Activated B cell treated with CpG ODN at 0.5 μM for 24 hours (primary cell): ENCODE measurements at regions of chr19 and their contacts with region 1.

Region 1: DNA sequence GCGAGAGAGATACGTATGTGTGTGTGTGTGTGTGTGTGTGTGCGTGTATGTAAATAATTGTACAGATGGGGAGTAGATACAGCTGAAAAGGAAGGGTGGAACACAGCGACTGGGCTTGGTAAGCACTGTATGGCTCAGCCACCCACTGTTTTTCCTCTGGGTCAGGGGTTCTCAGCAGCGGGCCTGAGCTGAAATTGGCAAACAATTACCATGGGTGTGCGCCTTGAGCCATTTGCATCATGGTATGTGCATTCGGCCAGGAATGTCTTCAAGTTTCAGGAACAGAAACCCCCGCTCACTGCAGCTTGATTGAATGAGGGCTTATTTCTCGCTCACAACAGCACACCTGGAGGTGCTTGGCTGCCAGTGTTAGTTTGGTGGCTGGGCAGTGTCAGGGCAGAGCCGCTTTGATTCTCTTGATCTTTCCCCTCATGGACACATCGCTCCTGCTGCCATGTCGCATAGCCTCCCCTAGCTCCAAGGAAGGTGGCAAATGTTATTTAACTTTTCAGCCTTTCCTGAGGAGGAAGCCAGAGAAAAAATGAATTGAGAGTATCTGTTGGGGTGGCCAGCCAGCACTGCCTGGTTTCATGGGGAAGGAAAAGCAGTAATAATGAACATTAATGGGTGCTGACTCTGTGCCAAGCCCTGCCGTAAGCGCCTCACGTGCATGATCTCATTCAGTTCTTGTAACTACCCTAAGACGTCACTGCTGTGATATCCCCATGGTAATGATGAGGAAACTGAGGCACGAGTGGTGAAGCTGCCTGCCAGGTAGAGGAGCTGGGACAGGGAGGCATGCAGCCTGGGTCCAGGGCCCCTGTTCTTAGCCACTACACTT is 126.9 kb downstream of the SIPA1L3 start:
- DNase-seq: peak; percentile 60
- ATAC-seq: peak; percentile 76
- H3K4me3 Mint-ChIP-seq: peak overlapping the region; percentile 79
- H3K27ac Mint-ChIP-seq: peak overlapping the region; percentile 98
- H3K4me1 Mint-ChIP-seq: peaks cover 85% of the 10 kb centered on the region
- H3K27me3 Mint-ChIP-seq: no peaks in the 10 kb centered on the region
- CTCF ChIP-seq: no peak

Region 2: GRCh38 chr19:37551129-37551993 is 482.5 kb before region 1 on chr19:
- CTCF ChIA-PET with region 1: no interaction called
- POLR2A ChIA-PET with region 1: no interaction called
- intact Hi-C with region 1: no loop called
- DNase-seq: peak; percentile 70
- ATAC-seq: peak; percentile 85
- H3K4me3 Mint-ChIP-seq: peak overlapping the region; percentile 93
- H3K27ac Mint-ChIP-seq: peak overlapping the region; percentile 91
- H3K4me1 Mint-ChIP-seq: peaks cover 12% of the 10 kb centered on the region
- H3K27me3 Mint-ChIP-seq: no peaks in the 10 kb centered on the region
- CTCF ChIP-seq: no peak

Region 3: DNA sequence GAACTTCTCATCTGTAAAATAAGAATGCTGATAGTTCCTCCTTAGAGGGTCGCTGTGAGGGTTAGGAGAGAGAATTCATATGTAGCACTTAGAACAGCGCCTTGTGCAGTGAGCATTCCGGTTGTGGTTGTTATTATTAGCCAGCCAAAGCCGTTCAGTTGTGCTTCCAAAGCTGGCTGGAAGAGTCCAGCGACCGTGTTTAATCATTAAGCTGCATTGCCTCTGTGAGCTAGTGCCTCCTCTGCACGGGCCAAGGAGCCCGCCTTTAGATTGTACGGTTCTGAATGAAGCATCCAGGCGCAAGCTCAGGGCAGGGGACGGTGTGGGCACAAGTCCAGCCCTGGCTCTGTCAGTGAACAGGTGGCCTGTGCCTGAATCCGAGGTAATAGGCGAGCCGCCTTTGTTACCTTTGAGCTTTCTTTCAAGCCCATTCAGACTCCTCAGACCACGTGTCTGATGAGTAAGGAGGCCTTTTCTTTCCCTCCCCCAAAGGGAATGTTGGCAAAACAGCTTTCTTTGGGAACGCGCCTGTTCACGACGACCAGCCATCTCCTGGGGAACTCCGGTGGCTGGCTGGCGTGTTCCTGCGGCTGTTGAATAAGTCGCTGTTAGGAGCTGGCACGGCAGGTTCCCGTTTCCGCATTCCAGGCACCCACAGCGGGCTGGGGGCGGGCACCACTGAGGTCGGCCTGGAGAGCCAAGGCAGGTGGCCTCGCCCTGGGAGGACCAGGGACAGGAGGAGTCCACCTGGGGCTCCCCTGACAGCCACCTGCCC is 101.8 kb before region 1 on chr19:
- CTCF ChIA-PET with region 1: interaction called, 7 read pairs
- POLR2A ChIA-PET with region 1: interaction called, 27 read pairs
- intact Hi-C with region 1: loop called (anchors 1 kb)
- DNase-seq: peak; percentile 52
- ATAC-seq: peak; percentile 30
- H3K4me3 Mint-ChIP-seq: peak overlapping the region; percentile 83
- H3K27ac Mint-ChIP-seq: peak overlapping the region; percentile 92
- H3K4me1 Mint-ChIP-seq: peaks cover 94% of the 10 kb centered on the region
- H3K27me3 Mint-ChIP-seq: no peaks in the 10 kb centered on the region
- CTCF ChIP-seq: no peak

Region 4: DNA sequence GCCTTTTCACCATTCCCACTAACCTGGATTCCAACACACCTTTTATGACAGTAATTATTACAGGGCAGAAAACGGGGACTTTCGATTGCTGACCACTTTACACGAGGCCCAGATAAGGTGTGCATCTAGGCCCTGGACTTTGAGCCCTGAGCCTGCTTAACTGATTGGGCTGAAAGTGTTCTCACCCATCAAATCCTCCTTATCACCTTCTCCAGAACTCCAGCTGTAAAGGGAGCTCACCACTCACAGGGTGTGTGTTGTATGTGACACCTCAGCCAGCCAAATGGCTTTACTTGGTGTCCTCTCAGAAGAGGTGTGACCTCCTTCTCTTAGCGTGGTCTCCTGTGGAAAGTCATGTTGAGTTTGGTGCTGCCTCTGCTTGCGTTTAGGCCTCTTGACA is 90.4 kb before region 1 on chr19:
- CTCF ChIA-PET with region 1: no interaction called
- POLR2A ChIA-PET with region 1: no interaction called
- intact Hi-C with region 1: no loop called
- DNase-seq: no peak
- ATAC-seq: no peak
- H3K4me3 Mint-ChIP-seq: no peak overlapping the region
- H3K27ac Mint-ChIP-seq: peak overlapping the region; percentile 31
- H3K4me1 Mint-ChIP-seq: peaks cover 58% of the 10 kb centered on the region
- H3K27me3 Mint-ChIP-seq: no peaks in the 10 kb centered on the region
- CTCF ChIP-seq: no peak

Region 5: GRCh38 chr19:37979547-37980082 is 54.3 kb before region 1 on chr19:
- CTCF ChIA-PET with region 1: no interaction called
- POLR2A ChIA-PET with region 1: interaction called, 41 read pairs
- intact Hi-C with region 1: loop called (anchors 1 kb)
- DNase-seq: no peak
- ATAC-seq: peak; percentile 3
- H3K4me3 Mint-ChIP-seq: peak overlapping the region; percentile 60
- H3K27ac Mint-ChIP-seq: peak overlapping the region; percentile 90
- H3K4me1 Mint-ChIP-seq: peaks cover 95% of the 10 kb centered on the region
- H3K27me3 Mint-ChIP-seq: no peaks in the 10 kb centered on the region
- CTCF ChIP-seq: no peak

Region 6: DNA sequence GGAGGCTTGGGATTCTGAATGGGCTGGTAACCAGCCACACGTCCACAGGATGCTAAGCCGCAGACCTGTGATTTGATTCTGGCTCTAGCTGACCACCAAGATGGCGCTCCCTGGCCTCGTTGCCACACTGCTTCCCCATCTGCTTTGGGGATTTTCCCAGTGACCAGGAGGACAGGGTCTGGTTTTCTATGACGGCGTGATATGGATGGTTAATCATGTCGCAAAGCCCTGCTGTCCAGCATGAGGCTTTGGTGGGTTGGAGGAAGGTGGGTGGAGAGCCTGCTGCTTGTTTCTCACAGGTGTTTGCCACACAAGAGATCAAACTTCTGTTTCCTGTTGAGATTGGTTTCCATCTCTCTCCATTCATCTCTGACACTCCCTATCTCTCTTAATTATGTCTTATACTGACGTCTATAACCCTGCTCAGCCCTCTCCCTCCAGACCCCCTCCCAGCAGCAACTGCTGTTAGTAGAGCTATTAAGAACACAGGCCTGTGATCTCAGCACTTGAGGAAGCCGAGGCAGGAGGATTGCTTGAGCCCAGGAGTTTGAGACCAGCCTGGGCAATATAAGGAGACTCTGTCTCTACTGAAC is 24.1 kb before region 1 on chr19:
- CTCF ChIA-PET with region 1: no interaction called
- POLR2A ChIA-PET with region 1: interaction called, 61 read pairs
- intact Hi-C with region 1: loop called (anchors 1 kb)
- DNase-seq: no peak
- ATAC-seq: peak; percentile 14
- H3K4me3 Mint-ChIP-seq: peak overlapping the region; percentile 52
- H3K27ac Mint-ChIP-seq: peak overlapping the region; percentile 84
- H3K4me1 Mint-ChIP-seq: peaks cover 70% of the 10 kb centered on the region
- H3K27me3 Mint-ChIP-seq: no peaks in the 10 kb centered on the region
- CTCF ChIP-seq: no peak

Region 7: DNA sequence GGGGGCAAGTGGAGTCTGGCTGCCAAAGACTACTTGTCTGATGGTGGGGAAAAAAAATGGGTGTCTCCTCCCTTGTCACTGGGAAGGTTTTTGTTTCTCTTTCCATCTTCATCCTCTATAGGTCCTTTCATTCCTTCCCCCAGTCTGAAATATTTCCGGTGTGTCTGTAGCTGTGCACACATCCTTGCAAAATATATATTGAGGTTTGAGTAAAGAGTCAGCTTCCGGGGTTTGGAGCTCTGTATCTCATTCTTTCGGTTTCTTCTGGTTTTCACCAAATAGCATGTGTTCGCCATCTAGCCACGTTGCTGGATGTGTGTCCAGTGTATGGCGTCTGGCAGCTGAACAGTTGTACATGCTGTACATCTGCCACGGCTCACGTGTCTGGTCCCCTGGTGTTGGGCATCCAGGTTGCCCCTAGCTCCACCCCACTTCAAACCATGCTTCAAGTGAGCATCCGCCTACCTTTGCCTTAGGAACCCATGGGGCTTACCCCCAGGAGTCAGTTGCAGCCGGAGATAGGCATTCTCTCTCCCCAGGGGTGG is 15.3 kb after region 1 on chr19:
- CTCF ChIA-PET with region 1: interaction called, 28 read pairs
- POLR2A ChIA-PET with region 1: interaction called, 192 read pairs
- intact Hi-C with region 1: loop called (anchors 1 kb)
- DNase-seq: peak; percentile 55
- ATAC-seq: peak; percentile 37
- H3K4me3 Mint-ChIP-seq: peak overlapping the region; percentile 79
- H3K27ac Mint-ChIP-seq: peak overlapping the region; percentile 99
- H3K4me1 Mint-ChIP-seq: peaks cover 75% of the 10 kb centered on the region
- H3K27me3 Mint-ChIP-seq: no peaks in the 10 kb centered on the region
- CTCF ChIP-seq: no peak

Region 8: DNA sequence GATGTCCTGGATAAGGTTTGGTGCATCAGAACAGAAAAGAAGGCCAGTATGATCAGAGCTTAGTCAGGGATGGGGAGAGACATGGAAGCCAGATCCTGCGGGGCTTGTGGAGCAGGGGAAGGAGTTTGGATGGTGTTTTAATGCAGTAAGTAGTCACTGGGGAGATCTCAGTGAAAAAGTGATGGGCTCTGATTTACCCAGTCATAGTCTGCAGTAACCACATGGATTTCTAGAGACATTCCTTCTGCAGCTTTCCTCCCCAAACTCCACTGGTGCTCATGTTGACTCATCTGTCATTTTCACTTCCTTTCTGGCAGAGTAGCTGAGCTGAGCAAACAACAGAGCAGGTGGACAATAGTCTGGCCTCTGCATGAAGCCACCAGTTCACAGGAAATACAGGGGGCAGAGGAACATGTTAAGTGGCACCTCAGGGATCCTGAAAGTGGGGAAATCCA is 46.1 kb after region 1 on chr19:
- CTCF ChIA-PET with region 1: no interaction called
- POLR2A ChIA-PET with region 1: interaction called, 4 read pairs
- intact Hi-C with region 1: loop called (anchors 1 kb)
- DNase-seq: no peak
- ATAC-seq: peak; percentile 83
- H3K4me3 Mint-ChIP-seq: peak overlapping the region; percentile 28
- H3K27ac Mint-ChIP-seq: peak overlapping the region; percentile 87
- H3K4me1 Mint-ChIP-seq: peaks cover 22% of the 10 kb centered on the region
- H3K27me3 Mint-ChIP-seq: no peaks in the 10 kb centered on the region
- CTCF ChIP-seq: no peak

Region 9: GRCh38 chr19:38263689-38264485 is 230.0 kb after region 1 on chr19:
- CTCF ChIA-PET with region 1: no interaction called
- POLR2A ChIA-PET with region 1: interaction called, 12 read pairs
- intact Hi-C with region 1: no loop called
- DNase-seq: peak; percentile 86
- ATAC-seq: peak; percentile 89
- H3K4me3 Mint-ChIP-seq: peak overlapping the region; percentile 91
- H3K27ac Mint-ChIP-seq: peak overlapping the region; percentile 99
- H3K4me1 Mint-ChIP-seq: peaks cover 43% of the 10 kb centered on the region
- H3K27me3 Mint-ChIP-seq: no peaks in the 10 kb centered on the region
- CTCF ChIP-seq: no peak

Region 10: GRCh38 chr19:39031368-39032062 is 997.6 kb after region 1 on chr19:
- CTCF ChIA-PET with region 1: no interaction called
- POLR2A ChIA-PET with region 1: no interaction called
- intact Hi-C with region 1: no loop called
- DNase-seq: peak; percentile 62
- ATAC-seq: peak; percentile 90
- H3K4me3 Mint-ChIP-seq: peak overlapping the region; percentile 71
- H3K27ac Mint-ChIP-seq: no peak overlapping the region
- H3K4me1 Mint-ChIP-seq: peaks cover 9% of the 10 kb centered on the region
- H3K27me3 Mint-ChIP-seq: peaks cover 6% of the 10 kb centered on the region
- CTCF ChIP-seq: no peak